Left ventricle myocardium inferior (tissue), 1 donor: ENCODE measurements at regions of chr6 and their contacts with region 1.

Region 1: DNA sequence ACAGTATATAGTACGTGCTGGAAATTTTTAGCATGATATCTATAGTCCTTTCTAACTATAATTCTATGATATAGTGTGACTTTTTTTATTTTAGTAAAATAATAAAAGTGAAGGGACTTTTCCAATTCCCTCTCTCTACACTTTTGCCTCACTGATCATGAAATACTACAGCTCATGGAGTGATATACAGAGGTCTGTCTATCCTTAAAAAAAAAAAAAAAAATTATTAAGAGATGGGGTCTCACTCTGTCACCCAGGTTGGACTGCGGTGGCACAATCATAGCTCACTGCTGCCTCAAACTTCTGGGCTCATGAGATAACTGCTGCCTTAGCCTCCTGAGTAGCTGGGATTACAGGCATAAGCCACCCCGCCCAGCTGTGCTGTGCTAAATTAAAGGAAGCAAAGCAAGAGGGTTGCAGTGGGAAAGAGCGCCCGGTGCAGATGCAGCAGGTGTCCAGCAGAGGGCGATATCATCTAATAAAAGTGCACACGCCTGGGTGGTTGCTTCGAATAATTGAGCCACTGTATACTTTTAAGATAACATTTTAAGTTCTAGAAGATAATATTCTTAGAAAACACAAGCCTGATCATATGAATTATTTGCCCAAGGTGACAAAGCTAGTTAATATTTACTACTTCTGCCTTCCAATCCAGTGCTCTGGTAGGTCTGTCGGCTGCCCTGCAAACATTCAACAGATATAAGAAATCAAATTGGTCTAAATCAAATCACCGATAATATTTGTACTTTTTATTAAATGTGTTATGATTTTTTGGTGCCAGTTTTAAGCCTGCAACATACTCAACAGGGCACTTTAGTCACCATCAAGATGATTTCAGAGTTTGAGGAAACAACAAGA is 94.9 kb upstream of the NT5E start:
- DNase-seq: peak; percentile 61
- H3K4me3 ChIP-seq: no peak overlapping the region
- H3K27ac ChIP-seq: no peak overlapping the region
- H3K4me1 ChIP-seq: no peaks in the 10 kb centered on the region
- H3K27me3 ChIP-seq: no peaks in the 10 kb centered on the region
- CTCF ChIP-seq: peak; percentile 95

Region 2: GRCh38 chr6:85482905-85483700 is 128.1 kb after region 1 on chr6:
- intact Hi-C with region 1: loop called (anchors 5 kb)
- DNase-seq: peak; percentile 76
- H3K4me3 ChIP-seq: peak overlapping the region; percentile 6
- H3K27ac ChIP-seq: peak overlapping the region; percentile 37
- H3K4me1 ChIP-seq: no peaks in the 10 kb centered on the region
- H3K27me3 ChIP-seq: no peaks in the 10 kb centered on the region
- CTCF ChIP-seq: peak; percentile 100